AG04449 (cell line): ENCODE measurements at regions of chr15 and their contacts with region 1.

Region 1: GRCh38 chr15:77821188-77821958 is 188.7 kb upstream of the LINGO1 start:
- DNase-seq: no peak
- H3K4me3 ChIP-seq: no peak overlapping the region
- CTCF ChIP-seq: peak; percentile 91

Region 2: GRCh38 chr15:76939715-76940114 is 881.7 kb before region 1 on chr15:
- CTCF ChIA-PET with region 1: interaction called, 10 read pairs
- POLR2A ChIA-PET with region 1: no interaction called
- DNase-seq: no peak
- H3K4me3 ChIP-seq: no peak overlapping the region
- CTCF ChIP-seq: no peak

Region 3: DNA sequence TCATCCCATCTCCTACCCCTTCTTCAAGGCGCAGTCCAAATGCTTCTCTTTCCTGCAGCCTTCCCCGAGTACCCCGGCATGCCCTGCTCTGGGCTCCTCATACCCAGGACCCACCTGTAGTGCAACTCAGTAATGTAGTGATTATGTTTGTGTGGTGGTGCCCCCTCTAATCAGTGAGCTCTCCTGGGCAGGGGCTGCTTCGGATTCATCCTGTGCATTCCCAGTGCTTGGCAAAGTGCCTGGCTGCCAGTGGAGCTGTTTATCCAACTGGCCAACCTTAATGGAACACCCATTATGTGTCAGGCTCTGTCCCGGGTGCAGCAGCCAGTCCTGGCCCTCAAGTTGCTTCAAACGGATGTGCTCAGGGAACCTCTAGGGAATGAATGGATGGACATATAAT is 14.3 kb before region 1 on chr15:
- CTCF ChIA-PET with region 1: interaction called, 13 read pairs
- POLR2A ChIA-PET with region 1: no interaction called
- DNase-seq: no peak
- H3K4me3 ChIP-seq: no peak overlapping the region
- CTCF ChIP-seq: no peak

Region 4: DNA sequence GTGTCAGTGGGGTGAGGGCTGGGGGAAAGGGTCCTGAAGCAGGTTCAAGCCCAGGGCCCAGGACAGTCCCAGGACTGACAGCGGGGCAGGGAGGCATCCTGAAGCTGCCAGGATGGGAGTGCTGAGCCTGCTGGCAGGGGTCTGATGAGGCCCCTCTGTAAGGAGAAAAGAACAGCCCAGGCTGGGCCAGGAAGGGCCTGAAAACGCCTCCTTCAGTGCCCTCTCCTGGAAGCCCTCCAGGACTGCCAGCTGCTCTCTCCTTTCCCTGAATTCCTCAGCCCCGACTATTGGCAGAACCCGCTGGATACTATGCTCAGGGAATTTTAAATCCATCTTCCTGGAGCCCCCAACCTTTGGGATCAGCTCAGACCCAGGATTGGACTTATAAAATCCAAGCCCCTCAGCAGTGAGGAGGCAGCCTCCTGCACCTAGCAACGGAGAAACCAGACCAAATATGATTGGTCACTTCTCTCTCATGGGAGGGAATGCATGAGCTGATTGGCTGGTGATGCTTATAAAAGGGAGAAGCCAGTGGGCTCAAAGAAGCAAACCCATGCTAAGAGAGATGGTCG is 14.8 kb after region 1 on chr15:
- CTCF ChIA-PET with region 1: interaction called, 52 read pairs
- POLR2A ChIA-PET with region 1: no interaction called
- DNase-seq: no peak
- H3K4me3 ChIP-seq: no peak overlapping the region
- CTCF ChIP-seq: no peak

Region 5: DNA sequence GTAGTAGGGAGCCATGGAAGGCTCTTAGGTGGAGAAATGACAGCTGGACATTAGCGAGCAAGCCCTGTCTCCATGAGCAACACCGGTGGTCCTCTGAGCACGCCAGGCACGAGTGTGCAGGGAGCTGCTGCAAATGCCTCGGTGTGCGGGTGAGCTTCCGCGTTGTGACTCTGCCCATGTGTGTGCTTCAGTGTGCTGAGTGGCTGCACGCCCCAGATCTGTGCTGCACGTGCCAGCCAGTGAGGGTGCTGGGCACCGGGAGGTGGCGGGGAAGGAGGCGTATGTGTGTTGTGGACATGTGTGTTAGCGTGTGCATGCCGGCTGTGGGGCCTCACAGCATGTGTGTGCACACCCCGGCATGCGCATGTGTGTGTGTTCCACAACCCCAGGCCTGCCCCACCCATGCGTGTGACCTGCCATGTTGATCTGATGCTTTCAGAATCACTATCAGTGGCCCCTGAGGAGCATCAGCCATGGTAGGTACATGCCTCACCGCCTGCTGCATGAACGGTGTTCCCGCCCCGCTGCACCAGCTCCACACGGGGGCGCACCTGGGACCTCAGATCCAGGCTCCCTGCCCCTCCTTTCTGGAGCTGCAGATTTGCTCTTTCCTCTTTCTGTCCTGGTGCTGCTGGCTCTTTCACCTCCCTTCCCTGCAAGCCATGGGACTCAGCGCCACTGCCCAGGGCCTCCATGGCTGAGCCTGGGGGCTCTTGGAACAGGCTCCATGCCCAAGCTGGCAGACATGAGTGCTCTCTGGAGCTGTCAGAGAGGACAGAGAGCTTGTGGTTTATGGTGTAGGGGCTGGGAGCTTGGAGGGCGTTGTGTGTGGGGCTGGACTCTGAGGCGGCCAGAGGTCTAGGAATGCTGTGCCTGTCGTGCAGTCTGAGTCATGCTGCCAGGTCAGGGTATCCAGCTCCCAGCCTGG is 86.7 kb after region 1 on chr15:
- CTCF ChIA-PET with region 1: no interaction called
- POLR2A ChIA-PET with region 1: no interaction called
- DNase-seq: no peak
- H3K4me3 ChIP-seq: no peak overlapping the region
- CTCF ChIP-seq: peak; percentile 60